ENCODE measurements at regions of chr10 and their contacts with region 1.

Region 1: DNA sequence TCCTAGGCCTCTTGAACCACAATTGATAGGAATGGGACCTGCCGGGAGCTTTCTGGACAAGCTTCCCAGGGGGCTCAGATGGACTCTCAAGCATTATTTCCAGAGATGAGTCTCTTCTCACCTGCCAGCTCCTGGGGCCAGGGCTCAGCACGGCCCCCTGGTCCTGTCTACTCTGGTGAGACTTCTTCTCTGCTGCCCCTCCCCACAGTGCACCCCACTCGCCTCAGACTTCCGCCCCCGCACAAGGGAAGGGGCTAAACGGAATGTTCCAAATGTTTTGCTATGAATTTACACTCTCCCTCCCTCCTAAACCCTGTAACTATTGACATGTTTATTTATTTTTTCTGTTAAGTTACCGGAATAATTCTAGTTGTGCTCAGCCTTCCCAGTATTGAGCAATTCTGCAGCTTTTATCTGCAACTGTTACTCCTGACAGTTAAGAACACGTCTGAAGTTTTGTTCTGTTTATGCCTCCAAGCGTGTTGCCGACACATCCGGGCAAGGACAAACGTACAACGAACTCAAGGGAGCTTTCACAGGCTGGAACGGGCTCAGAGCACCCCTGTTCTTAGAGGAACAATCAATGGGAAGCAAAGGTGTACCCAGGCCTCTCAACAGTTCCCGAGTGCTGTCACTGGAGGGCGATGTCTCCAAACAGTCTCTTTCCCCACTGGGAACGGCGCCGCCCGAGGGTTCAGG is 55.2 kb downstream of the FHIP2A start:
- DNase-seq: peak; percentile 80
- H3K4me3 ChIP-seq: peak overlapping the region in 1 of 2 experiments; percentile 43; a peak in 1 of 4 replicates
- H3K27ac ChIP-seq: no peak overlapping the region
- H3K4me1 ChIP-seq: peaks cover 1 to 6% of the 10 kb centered on the region in 2 experiments; a peak in 1 of 4 replicates
- H3K27me3 ChIP-seq: no peaks in the 10 kb centered on the region
- CTCF ChIP-seq: peak; percentile 81
- EP300 ChIP-seq: no peak
- RAD21 ChIP-seq: peak; percentile 94

Region 2: GRCh38 chr10:114565066-114565465 is 311.7 kb before region 1 on chr10:
- CTCF ChIA-PET with region 1: no interaction called
- POLR2A ChIA-PET with region 1: no interaction called
- DNase-seq: no peak
- H3K4me3 ChIP-seq: no peak overlapping the region
- H3K27ac ChIP-seq: peak overlapping the region in 1 of 2 experiments; percentile 33; a peak in 1 of 4 replicates
- H3K4me1 ChIP-seq: no peaks in the 10 kb centered on the region; a peak in 1 of 4 replicates
- H3K27me3 ChIP-seq: no peaks in the 10 kb centered on the region
- CTCF ChIP-seq: no peak
- EP300 ChIP-seq: no peak
- RAD21 ChIP-seq: no peak

Region 3: DNA sequence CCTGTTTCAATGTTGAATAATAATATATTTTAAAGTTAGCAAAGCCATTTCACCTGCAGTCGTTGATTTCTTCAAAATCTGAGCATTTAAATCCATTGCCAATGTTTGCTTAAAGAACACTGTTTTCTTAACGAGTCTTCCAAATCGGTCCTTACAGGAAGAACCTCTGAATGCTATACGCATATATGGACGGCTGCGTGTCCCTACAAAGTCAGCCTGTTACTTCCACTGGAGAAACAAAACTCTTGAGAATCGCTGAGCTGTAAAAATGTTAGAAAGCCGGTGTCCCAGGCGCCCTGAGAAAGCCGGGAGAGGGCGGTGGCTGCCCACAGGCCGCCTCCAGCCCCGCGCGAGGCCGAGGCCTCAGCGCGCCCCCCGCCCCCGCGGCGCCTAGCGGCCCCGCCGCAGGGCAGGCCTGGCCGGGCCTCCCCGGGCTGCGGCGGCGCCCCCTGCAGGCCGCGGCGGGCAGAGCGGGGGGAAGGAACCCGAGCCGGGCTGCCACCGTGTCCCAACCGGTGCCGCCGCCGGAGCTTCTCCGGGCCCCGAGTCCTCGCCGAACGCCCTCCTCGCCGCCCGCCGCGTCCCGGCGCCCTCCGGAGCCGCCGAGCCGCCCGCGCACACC is 55.3 kb before region 1 on chr10 and contains the start of gene FHIP2A:
- CTCF ChIA-PET with region 1: interaction called, 18 read pairs
- POLR2A ChIA-PET with region 1: no interaction called
- DNase-seq: peak; percentile 96
- H3K4me3 ChIP-seq: peak within 1 kb of the TSS; percentile 71 to 87
- H3K27ac ChIP-seq: peak within 1 kb of the TSS; percentile 88 to 99
- H3K4me1 ChIP-seq: peaks cover 0 to 13% of the 10 kb centered on the region in 2 experiments
- H3K27me3 ChIP-seq: no peaks in the 10 kb centered on the region
- CTCF ChIP-seq: peak; percentile 39
- EP300 ChIP-seq: no peak
- RAD21 ChIP-seq: no peak; the same call in none of the 2 replicates
- polyA plus RNA-seq, gene FHIP2A: 6.1 and 9.1 TPM in 2 replicates

Region 4: DNA sequence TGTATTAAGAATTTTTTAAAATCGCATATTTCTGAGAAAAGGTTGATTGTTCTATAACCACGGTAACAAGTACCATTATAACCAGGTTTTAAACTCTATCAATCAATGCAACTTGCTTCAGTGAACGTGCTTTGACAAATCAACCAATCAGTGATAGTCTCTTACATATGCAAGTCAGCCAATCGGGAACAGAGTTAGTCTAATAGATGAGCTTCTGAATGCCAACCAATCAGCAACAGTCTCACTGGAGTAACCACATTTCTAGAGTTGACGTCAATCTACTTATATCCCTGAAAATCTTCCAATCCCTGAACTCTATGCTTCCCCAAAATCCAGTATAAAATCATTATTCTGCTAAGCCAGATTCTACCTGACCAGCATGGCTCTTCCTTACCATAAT is 16.5 kb after region 1 on chr10:
- CTCF ChIA-PET with region 1: interaction called, 10 read pairs
- POLR2A ChIA-PET with region 1: no interaction called
- DNase-seq: no peak
- H3K4me3 ChIP-seq: no peak overlapping the region
- H3K27ac ChIP-seq: no peak overlapping the region
- H3K4me1 ChIP-seq: no peaks in the 10 kb centered on the region
- H3K27me3 ChIP-seq: no peaks in the 10 kb centered on the region
- CTCF ChIP-seq: no peak
- EP300 ChIP-seq: no peak
- RAD21 ChIP-seq: no peak

Region 5: DNA sequence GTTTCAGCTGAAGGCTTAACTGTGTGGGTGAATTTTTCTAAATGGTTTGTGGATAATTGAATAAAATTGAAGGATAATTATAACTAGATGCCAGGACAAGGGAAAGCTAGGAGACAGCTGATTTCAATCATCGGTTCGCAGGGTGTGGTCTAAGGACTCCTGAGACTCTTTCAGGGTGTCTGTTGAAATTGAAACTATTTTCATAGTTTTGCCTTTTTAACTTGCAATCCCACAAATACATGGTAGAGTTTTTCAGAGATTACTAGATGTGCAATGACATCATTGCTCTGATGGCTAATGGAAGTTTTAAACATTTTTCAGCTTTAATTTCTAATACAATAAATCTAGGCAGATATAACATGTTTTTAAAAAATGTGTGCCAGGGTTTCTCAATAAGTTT is 79.7 kb after region 1 on chr10:
- CTCF ChIA-PET with region 1: interaction called, 12 read pairs
- POLR2A ChIA-PET with region 1: no interaction called
- DNase-seq: no peak
- H3K4me3 ChIP-seq: no peak overlapping the region
- H3K27ac ChIP-seq: peak overlapping the region; percentile 11 to 64; a peak in 3 of 4 replicates
- H3K4me1 ChIP-seq: peaks cover 0 to 18% of the 10 kb centered on the region in 2 experiments; a peak in 2 of 4 replicates
- H3K27me3 ChIP-seq: no peaks in the 10 kb centered on the region
- CTCF ChIP-seq: no peak
- EP300 ChIP-seq: no peak
- RAD21 ChIP-seq: no peak

Region 6: GRCh38 chr10:115049318-115049717 is 172.6 kb after region 1 on chr10:
- CTCF ChIA-PET with region 1: interaction called, 14 read pairs
- POLR2A ChIA-PET with region 1: no interaction called
- DNase-seq: no peak
- H3K4me3 ChIP-seq: no peak overlapping the region
- H3K27ac ChIP-seq: no peak overlapping the region
- H3K4me1 ChIP-seq: peaks cover 0 to 8% of the 10 kb centered on the region in 2 experiments; a peak in 2 of 4 replicates
- H3K27me3 ChIP-seq: no peaks in the 10 kb centered on the region
- CTCF ChIP-seq: no peak
- EP300 ChIP-seq: no peak
- RAD21 ChIP-seq: no peak; the same call in 1 of the 2 replicates

Region 7: DNA sequence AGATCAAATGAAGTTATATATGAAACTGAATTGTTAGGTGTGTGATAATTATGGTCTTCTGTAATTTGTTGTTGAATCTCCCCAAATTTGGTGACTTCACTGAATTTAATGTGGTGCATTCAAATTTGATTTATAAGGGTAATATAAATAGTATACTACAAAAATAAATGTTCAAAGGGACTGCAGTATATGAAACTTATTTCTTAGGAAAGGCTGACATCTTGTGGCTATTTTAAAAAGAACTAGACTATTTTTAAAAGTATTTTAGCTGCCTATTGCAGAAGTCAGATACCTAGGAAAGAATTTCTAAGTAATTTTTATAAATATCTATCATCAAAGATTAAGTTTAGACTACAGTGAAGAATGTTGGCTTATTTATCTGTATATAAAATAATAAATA is 253.0 kb after region 1 on chr10:
- CTCF ChIA-PET with region 1: interaction called, 235 read pairs
- POLR2A ChIA-PET with region 1: no interaction called
- DNase-seq: peak; percentile 13
- H3K4me3 ChIP-seq: no peak overlapping the region
- H3K27ac ChIP-seq: no peak overlapping the region
- H3K4me1 ChIP-seq: no peaks in the 10 kb centered on the region
- H3K27me3 ChIP-seq: no peaks in the 10 kb centered on the region
- CTCF ChIP-seq: peak; percentile 64
- EP300 ChIP-seq: no peak
- RAD21 ChIP-seq: peak; percentile 71

Measured in SK-N-SH (cell line).